Naive thymus-derived CD4-positive, alpha-beta T cell (primary cell): ENCODE measurements at regions of chr6 and their contacts with region 1.

Region 1: DNA sequence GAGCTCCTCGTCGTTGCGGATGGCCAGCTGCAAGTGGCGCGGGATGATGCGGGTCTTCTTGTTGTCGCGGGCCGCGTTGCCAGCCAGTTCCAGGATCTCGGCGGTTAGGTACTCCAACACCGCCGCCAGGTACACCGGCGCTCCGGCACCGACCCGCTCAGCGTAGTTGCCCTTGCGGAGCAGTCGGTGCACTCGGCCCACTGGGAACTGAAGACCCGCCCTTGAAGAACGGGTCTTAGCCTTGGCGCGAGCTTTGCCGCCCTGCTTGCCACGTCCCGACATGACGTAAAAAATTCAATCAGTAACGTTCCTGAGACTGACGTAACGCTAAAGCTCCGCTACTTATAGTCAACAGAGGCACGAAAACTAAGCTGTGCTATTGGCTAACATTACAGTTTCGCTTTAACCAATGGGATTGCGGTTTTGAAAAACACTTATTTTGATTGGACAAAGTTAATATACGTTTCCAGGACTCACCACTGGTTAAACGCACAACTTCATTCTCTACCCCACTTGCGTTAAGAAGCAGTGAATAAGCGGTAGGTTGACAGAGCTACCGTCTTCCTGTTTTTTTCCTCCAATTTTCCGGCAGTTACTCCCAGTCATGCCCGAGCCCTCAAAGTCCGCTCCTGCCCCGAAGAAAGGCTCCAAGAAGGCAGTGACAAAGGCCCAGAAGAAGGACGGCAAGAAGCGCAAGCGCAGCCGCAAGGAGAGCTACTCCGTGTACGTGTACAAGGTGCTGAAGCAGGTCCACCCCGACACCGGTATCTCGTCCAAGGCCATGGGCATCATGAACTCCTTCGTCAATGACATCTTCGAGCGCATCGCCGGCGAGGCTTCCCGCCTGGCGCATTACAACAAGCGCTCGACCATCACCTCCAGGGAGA is 73.9 kb downstream of the OR2B2 start:
- DNase-seq: peak; percentile 65 to 96 (median 93)
- ATAC-seq: peak; percentile 86
- H3K4me3 ChIP-seq: peak overlapping the region; percentile 87
- H3K4me3 Mint-ChIP-seq: no peak overlapping the region
- H3K27ac ChIP-seq: peak overlapping the region; percentile 93
- H3K27ac Mint-ChIP-seq: no peak overlapping the region
- H3K4me1 ChIP-seq: peaks cover 22 to 34% of the 10 kb centered on the region in 2 donors
- H3K4me1 Mint-ChIP-seq: peaks cover 7 to 39% (median 29%) of the 10 kb centered on the region in 7 donors
- H3K27me3 ChIP-seq: no peaks in the 10 kb centered on the region
- H3K27me3 Mint-ChIP-seq: peaks cover 0 to 14% (median 7%) of the 10 kb centered on the region in 5 donors

Region 2: GRCh38 chr6:26031595-26032339 is 1806.5 kb before region 1 on chr6:
- CTCF ChIA-PET with region 1: no interaction called
- POLR2A ChIA-PET with region 1: interaction called, 44 read pairs
- intact Hi-C with region 1: loop called (anchors 2 kb)
- DNase-seq: peak; percentile 56 to 94 (median 90)
- ATAC-seq: peak; percentile 79
- H3K4me3 ChIP-seq: peak overlapping the region; percentile 70
- H3K4me3 Mint-ChIP-seq: peak overlapping the region; percentile 89 to 98 (median 96)
- H3K27ac ChIP-seq: peak overlapping the region; percentile 69
- H3K27ac Mint-ChIP-seq: peak overlapping the region; percentile 93 to 98 (median 96)
- H3K4me1 ChIP-seq: peaks cover 23 to 31% of the 10 kb centered on the region in 2 donors
- H3K4me1 Mint-ChIP-seq: peaks cover 14 to 69% (median 43%) of the 10 kb centered on the region in 7 donors
- H3K27me3 ChIP-seq: no peaks in the 10 kb centered on the region
- H3K27me3 Mint-ChIP-seq: peaks cover 0 to 7% (median 0%) of the 10 kb centered on the region in 5 donors

Region 3: DNA sequence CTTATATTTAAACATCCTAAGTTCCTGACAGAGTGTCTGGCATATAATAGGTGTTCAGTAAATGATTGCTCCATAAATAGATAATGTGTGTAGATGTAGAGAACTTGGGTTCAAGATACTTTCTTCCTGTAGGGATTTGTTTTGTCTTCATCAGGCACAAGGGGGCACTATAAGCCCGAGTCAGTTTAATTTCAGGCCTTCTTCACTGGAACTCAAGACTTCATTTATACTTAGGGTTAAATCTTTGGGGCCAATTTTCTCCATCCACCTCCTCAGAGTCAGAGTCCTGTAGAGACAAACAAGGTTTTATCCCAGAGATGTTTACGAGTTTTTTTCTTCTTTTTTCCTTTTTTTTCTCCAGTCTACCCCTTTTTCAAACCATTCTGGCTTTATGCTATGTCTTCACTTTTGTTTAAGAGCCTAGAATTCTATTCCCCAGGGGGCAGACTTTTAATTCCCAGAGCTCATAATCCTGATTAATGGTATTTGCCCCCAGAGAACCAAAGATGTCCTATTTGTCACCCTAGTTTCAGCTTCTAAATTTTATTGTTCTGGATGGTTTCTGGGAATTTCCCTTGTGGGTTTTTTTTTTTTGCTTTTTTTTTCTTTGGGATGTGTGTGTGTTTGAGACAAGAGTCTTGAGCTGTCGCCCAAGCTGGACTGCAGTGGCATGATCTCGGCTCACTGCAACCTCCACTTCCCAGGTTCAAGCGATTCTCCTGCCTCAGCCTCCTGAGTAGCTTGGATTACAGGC is 1662.7 kb before region 1 on chr6:
- CTCF ChIA-PET with region 1: no interaction called
- POLR2A ChIA-PET with region 1: interaction called, 18 read pairs
- intact Hi-C with region 1: no loop called
- DNase-seq: peak in 7 of 9 donors; percentile 57 to 75 (median 66)
- ATAC-seq: peak; percentile 32
- H3K4me3 ChIP-seq: no peak overlapping the region
- H3K4me3 Mint-ChIP-seq: peak overlapping the region in 7 of 10 donors; percentile 15 to 63 (median 43)
- H3K27ac ChIP-seq: no peak overlapping the region
- H3K27ac Mint-ChIP-seq: peak overlapping the region; percentile 32 to 89 (median 76)
- H3K4me1 ChIP-seq: peaks cover 16 to 19% of the 10 kb centered on the region in 2 donors
- H3K4me1 Mint-ChIP-seq: peaks cover 20 to 51% (median 39%) of the 10 kb centered on the region in 7 donors
- H3K27me3 ChIP-seq: no peaks in the 10 kb centered on the region
- H3K27me3 Mint-ChIP-seq: no peaks in the 10 kb centered on the region

Region 4: DNA sequence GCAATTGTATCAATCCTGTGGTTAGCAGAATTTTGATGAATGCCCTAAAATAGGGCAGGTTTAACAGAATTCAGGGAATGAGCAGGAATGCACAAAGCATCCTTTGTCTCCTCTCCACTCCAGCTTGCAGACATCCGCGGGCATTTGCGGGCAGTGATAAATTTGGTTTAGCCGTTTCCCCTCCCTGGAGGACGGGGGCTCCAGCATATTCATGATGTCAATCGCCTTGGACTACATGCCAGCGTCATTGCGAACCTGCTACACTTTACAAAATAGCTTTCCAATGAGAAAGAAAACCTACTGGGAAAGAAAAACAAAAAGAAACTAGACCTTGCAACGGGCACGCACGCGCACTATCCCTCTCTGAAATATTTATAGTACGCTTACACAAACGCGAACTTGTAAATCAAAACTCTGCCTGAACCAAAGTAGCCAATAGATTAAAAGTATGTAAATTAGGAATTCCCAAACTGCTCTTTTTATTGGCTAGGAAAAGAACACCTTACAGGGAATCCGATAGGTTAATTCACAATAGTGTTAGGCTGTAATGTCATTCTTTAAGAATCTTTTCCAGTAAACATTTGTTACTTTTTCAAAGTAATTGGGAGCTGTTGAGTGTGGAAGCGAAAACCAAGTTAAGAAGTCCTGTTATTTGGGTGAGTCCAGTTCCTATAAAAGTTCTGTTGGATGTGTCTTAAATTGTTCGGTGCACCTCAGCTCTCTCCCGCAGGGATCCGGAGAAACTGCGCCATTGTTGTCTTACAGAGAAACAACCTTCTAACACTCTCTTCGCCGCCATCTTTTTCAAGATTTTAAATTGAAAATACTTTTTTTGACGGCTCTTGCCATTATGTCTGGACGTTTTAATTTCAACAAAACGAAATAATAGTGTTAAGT is 1614.4 kb before region 1 on chr6:
- CTCF ChIA-PET with region 1: no interaction called
- POLR2A ChIA-PET with region 1: interaction called, 15 read pairs
- intact Hi-C with region 1: no loop called
- DNase-seq: peak in 7 of 9 donors; percentile 79 to 89 (median 84)
- ATAC-seq: peak; percentile 93
- H3K4me3 ChIP-seq: peak overlapping the region; percentile 77
- H3K4me3 Mint-ChIP-seq: no peak overlapping the region
- H3K27ac ChIP-seq: peak overlapping the region; percentile 77
- H3K27ac Mint-ChIP-seq: no peak overlapping the region
- H3K4me1 ChIP-seq: peaks cover 14 to 18% of the 10 kb centered on the region in 2 donors
- H3K4me1 Mint-ChIP-seq: peaks cover 10 to 25% (median 18%) of the 10 kb centered on the region in 7 donors
- H3K27me3 ChIP-seq: no peaks in the 10 kb centered on the region
- H3K27me3 Mint-ChIP-seq: no peaks in the 10 kb centered on the region

Region 5: DNA sequence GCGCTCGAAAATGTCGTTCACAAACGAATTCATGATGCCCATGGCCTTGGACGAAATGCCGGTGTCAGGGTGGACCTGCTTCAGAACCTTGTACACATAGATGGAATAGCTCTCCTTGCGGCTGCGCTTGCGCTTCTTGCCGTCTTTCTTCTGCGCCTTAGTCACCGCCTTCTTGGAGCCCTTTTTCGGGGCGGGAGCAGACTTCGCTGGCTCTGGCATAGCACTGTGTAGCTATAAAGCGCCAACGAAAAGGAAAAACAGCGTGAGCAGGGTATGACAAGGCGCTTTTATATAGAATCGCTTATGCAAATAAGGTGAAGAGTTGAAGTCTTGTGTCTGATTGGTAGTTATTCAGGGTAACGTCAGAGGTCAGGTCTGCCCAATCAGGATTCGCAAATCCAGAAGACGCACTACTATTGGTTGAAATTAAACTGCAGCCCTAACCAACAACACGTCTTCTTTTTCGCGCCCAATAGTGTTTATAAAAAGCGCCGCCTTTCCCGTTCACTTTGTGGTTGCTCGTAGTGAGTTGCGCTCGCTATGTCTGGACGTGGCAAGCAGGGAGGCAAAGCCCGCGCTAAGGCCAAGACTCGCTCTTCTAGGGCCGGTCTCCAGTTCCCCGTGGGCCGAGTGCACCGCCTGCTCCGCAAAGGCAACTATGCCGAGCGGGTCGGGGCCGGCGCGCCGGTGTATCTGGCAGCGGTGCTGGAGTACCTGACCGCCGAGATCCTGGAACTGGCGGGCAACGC is 705.6 kb before region 1 on chr6:
- CTCF ChIA-PET with region 1: no interaction called
- POLR2A ChIA-PET with region 1: interaction called, 72 read pairs
- intact Hi-C with region 1: no loop called
- DNase-seq: peak; percentile 73 to 99 (median 97)
- ATAC-seq: peak; percentile 93
- H3K4me3 ChIP-seq: peak overlapping the region; percentile 90
- H3K4me3 Mint-ChIP-seq: no peak overlapping the region
- H3K27ac ChIP-seq: peak overlapping the region; percentile 81
- H3K27ac Mint-ChIP-seq: no peak overlapping the region
- H3K4me1 ChIP-seq: peaks cover 10 to 18% of the 10 kb centered on the region in 2 donors
- H3K4me1 Mint-ChIP-seq: peaks cover 6 to 49% (median 21%) of the 10 kb centered on the region in 7 donors
- H3K27me3 ChIP-seq: no peaks in the 10 kb centered on the region
- H3K27me3 Mint-ChIP-seq: no peaks in the 10 kb centered on the region

Region 6: DNA sequence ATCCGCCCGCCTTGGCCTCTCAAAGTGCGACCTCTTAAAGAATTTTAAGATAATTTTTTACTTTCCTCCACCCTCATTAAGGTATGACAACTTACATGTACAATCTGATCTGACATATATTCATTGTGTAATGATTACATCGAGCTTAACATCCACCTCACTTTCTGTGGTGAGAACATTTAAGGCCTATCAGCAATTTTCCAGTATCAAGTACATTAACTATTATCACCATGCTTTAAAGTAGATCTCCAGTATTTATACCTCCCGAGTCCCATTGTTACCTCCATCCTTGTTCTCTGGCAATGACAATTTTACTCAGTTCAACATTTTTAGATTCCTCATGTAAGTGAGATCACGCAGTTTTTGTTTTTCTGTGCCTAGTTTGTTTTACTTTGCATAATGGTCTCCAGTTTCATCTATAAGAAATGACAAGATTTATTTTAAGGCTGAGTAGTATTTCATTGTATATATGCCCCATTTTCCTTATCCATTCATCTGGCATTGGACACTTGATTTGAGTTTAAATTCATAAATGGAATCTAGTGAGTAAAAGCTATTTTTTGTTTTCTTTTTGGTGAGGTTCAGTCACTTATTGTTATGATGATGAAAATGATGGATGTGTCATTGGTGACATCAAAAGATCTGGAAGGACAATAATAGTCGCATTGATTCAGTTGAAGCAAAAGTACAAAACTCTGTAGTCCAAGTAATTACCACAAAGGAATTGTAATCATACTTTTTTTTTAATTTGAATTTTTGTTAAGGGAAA is 13.1 kb before region 1 on chr6:
- CTCF ChIA-PET with region 1: interaction called, 14 read pairs
- POLR2A ChIA-PET with region 1: interaction called, 445 read pairs
- intact Hi-C with region 1: loop called (anchors 1 kb)
- DNase-seq: no peak
- ATAC-seq: no peak
- H3K4me3 ChIP-seq: peak overlapping the region; percentile 87
- H3K4me3 Mint-ChIP-seq: peak overlapping the region; percentile 82 to 99 (median 94)
- H3K27ac ChIP-seq: peak overlapping the region; percentile 89
- H3K27ac Mint-ChIP-seq: peak overlapping the region; percentile 90 to 100 (median 98)
- H3K4me1 ChIP-seq: peaks cover 6% of the 10 kb centered on the region in 2 donors
- H3K4me1 Mint-ChIP-seq: peaks cover 11 to 50% (median 33%) of the 10 kb centered on the region in 7 donors
- H3K27me3 ChIP-seq: no peaks in the 10 kb centered on the region
- H3K27me3 Mint-ChIP-seq: peaks cover 0 to 4% (median 0%) of the 10 kb centered on the region in 5 donors

Region 7: GRCh38 chr6:28080631-28081485 is 242.6 kb after region 1 on chr6:
- CTCF ChIA-PET with region 1: no interaction called
- POLR2A ChIA-PET with region 1: interaction called, 3 read pairs
- intact Hi-C with region 1: loop called in 1 of 2 experiments (anchors 10 kb)
- DNase-seq: peak; percentile 89 to 94 (median 93)
- ATAC-seq: peak; percentile 85
- H3K4me3 ChIP-seq: peak overlapping the region; percentile 99
- H3K4me3 Mint-ChIP-seq: peak overlapping the region; percentile 87 to 99 (median 98)
- H3K27ac ChIP-seq: peak overlapping the region; percentile 97
- H3K27ac Mint-ChIP-seq: peak overlapping the region; percentile 84 to 99 (median 98)
- H3K4me1 ChIP-seq: peaks cover 6 to 7% of the 10 kb centered on the region in 2 donors
- H3K4me1 Mint-ChIP-seq: peaks cover 12 to 27% (median 16%) of the 10 kb centered on the region in 7 donors
- H3K27me3 ChIP-seq: no peaks in the 10 kb centered on the region
- H3K27me3 Mint-ChIP-seq: peaks cover 0 to 3% (median 0%) of the 10 kb centered on the region in 5 donors

Region 8: DNA sequence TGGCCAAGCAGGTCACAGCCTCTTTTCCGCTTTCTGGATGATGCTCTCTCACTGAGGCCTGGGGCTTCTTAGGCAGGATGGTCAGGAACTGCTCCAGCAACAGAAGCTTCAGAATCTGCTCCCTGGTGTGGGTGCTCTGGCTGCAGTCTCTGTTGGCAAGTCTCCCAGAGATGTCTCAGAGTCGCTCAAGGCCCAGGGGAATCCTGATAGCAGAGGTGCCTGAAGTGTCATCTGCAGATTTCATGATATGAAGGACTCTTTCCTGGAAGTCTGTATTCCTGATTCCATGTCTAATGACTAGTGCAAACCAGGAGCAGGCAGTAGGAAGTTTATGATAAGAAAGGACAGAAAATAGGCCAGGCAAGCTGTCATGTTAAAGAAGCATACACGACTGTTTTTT is 477.3 kb after region 1 on chr6:
- CTCF ChIA-PET with region 1: no interaction called
- POLR2A ChIA-PET with region 1: no interaction called
- intact Hi-C with region 1: no loop called
- DNase-seq: no peak
- ATAC-seq: no peak
- H3K4me3 ChIP-seq: no peak overlapping the region
- H3K4me3 Mint-ChIP-seq: no peak overlapping the region
- H3K27ac ChIP-seq: no peak overlapping the region
- H3K27ac Mint-ChIP-seq: no peak overlapping the region
- H3K4me1 ChIP-seq: no peaks in the 10 kb centered on the region
- H3K4me1 Mint-ChIP-seq: peaks cover 0 to 1% (median 0%) of the 10 kb centered on the region in 7 donors
- H3K27me3 ChIP-seq: no peaks in the 10 kb centered on the region
- H3K27me3 Mint-ChIP-seq: peaks cover 8 to 30% (median 25%) of the 10 kb centered on the region in 5 donors

Region 9: GRCh38 chr6:28710466-28711191 is 872.3 kb after region 1 on chr6:
- CTCF ChIA-PET with region 1: no interaction called
- POLR2A ChIA-PET with region 1: no interaction called
- intact Hi-C with region 1: no loop called
- DNase-seq: no peak
- ATAC-seq: no peak
- H3K4me3 ChIP-seq: no peak overlapping the region
- H3K4me3 Mint-ChIP-seq: peak overlapping the region in 1 of 10 donors; percentile 69
- H3K27ac ChIP-seq: no peak overlapping the region
- H3K27ac Mint-ChIP-seq: no peak overlapping the region
- H3K4me1 ChIP-seq: no peaks in the 10 kb centered on the region
- H3K4me1 Mint-ChIP-seq: peaks cover 0 to 13% (median 11%) of the 10 kb centered on the region in 7 donors
- H3K27me3 ChIP-seq: peaks cover 3 to 4% of the 10 kb centered on the region in 2 donors
- H3K27me3 Mint-ChIP-seq: peaks cover 52 to 86% (median 79%) of the 10 kb centered on the region in 5 donors